Thyroid gland (tissue), 4 donors: ENCODE measurements at regions of chr5 and their contacts with region 1.

Region 1: DNA sequence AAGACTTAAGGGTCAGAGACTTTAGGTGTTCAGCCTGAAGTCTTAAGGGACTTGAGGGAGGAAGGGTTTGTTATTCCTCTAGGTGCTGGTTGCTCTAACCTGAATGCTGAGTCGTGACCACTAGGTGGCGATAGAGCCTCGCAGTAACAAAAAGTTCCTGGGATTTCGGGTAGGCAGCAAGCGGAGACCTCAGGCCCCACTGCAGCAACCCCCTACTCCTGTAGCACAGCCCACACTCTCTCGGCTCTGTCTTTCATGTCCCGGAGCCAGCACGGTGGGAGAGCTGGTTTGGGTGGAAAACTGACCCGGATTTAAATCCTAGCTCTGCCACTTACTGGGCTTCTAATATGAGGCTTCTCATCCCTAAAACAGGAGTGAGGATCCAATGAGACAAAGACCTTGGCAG is 100.3 kb upstream of the PANK3 start:
- DNase-seq: peak; percentile 77 to 81
- H3K4me3 ChIP-seq: no peak overlapping the region
- H3K27ac ChIP-seq: no peak overlapping the region
- H3K4me1 ChIP-seq: peaks cover 4 to 8% of the 10 kb centered on the region in 2 donors
- H3K27me3 ChIP-seq: no peaks in the 10 kb centered on the region
- CTCF ChIP-seq: peak; percentile 62 to 89 (median 81)
- POLR2A ChIP-seq: no peak

Region 2: DNA sequence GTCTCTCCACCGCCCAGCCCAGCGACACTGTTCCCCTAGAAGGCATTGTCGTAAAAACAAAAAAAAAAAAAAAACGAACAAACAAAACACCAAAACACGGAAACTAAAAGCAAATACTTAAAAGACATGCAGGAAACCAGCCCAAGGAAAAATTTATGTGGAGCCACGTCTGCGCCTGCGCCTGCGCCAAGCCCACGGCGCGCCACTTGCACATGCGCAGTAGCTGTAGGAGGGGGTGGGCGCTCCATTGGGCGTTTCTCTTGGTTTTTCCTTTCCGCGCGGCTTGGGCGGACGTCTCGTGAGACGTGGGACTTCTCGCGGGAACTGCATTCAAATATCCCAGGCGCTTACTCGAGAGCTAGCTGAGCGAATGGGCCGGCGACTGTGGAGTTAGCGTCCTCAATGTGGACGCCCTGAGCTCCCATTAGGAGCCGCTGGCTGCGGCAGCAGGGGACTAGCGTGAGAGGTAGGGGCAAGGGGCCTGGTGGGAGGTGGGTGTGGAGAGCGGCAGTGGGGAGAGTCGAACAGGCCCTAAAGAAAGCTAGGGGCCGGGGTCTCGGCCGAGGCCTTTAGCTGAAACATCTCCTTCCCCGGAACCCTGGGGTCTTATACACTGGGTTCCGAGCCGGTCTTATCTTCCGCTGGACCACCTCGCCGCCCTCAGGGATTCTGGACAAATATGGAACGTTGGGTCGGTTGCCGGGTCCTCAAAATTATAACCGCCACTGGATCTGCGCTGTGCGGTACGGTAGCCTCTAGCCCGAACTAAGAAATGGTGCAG is 904.1 kb after region 1 on chr5 and contains the start of gene SPDL1:
- intact Hi-C with region 1: loop called (anchors 10 kb)
- DNase-seq: peak; percentile 95 to 96
- H3K4me3 ChIP-seq: peak within 1 kb of the TSS in 2 of 3 donors; percentile 37 to 66
- H3K27ac ChIP-seq: peak within 1 kb of the TSS; percentile 29 to 52 (median 51)
- H3K4me1 ChIP-seq: peaks cover 0 to 4% of the 10 kb centered on the region in 2 donors
- H3K27me3 ChIP-seq: no peaks in the 10 kb centered on the region
- CTCF ChIP-seq: no peak
- POLR2A ChIP-seq: peak in 1 of 2 donors; percentile 79
- total RNA-seq, gene SPDL1: 4.1 to 19.3 (median 7.6) TPM